ENCODE measurements at regions of chr12 and their contacts with region 1.

Region 1: GRCh38 chr12:49256274-49256637 is 8.6 kb upstream of the TUBA1C start:
- DNase-seq: no peak
- ATAC-seq: no peak
- H3K4me3 ChIP-seq: no peak overlapping the region
- H3K4me3 Mint-ChIP-seq: no peak overlapping the region
- H3K27ac ChIP-seq: no peak overlapping the region
- H3K27ac Mint-ChIP-seq: no peak overlapping the region
- H3K4me1 ChIP-seq: no peaks in the 10 kb centered on the region
- H3K4me1 Mint-ChIP-seq: no peaks in the 10 kb centered on the region
- H3K27me3 ChIP-seq: no peaks in the 10 kb centered on the region
- H3K27me3 Mint-ChIP-seq: no peaks in the 10 kb centered on the region

Region 2: GRCh38 chr12:49146406-49146805 is 109.8 kb before region 1 on chr12:
- CTCF ChIA-PET with region 1: no interaction called
- POLR2A ChIA-PET with region 1: interaction called in 1 of 2 experiments, 14 read pairs
- DNase-seq: no peak
- ATAC-seq: no peak
- H3K4me3 ChIP-seq: no peak overlapping the region
- H3K4me3 Mint-ChIP-seq: no peak overlapping the region
- H3K27ac ChIP-seq: no peak overlapping the region
- H3K27ac Mint-ChIP-seq: no peak overlapping the region
- H3K4me1 ChIP-seq: no peaks in the 10 kb centered on the region
- H3K4me1 Mint-ChIP-seq: peaks cover 0 to 6% (median 0%) of the 10 kb centered on the region in 3 donors
- H3K27me3 ChIP-seq: no peaks in the 10 kb centered on the region
- H3K27me3 Mint-ChIP-seq: no peaks in the 10 kb centered on the region